MCF 10A (cell line): ENCODE measurements at regions of chr10 and their contacts with region 1.

Region 1: DNA sequence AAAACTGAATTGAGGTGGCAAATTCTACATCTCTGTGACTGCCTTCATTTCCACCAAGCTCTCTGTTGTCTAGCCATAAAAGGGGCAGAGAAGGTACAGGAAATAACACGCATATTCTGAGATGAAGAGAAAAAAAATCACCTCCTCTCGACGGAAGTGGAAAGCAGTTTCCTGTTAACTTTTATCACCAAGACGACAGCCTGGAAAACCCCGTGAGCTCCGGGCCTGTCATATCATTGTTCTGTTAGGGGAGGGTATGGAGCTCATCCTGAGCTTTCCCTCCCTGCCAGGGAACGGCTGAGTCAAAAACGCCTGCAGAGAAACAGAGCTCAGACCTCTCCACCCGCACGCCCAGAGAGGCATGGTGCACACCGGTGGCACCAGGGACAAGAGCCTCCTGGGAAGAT is 200.3 kb downstream of the PRPF18 start:
- DNase-seq: no peak
- H3K4me3 Mint-ChIP-seq: no peak overlapping the region
- H3K27ac Mint-ChIP-seq: no peak overlapping the region
- H3K4me1 Mint-ChIP-seq: no peaks in the 10 kb centered on the region
- H3K27me3 Mint-ChIP-seq: no peaks in the 10 kb centered on the region
- CTCF ChIP-seq: no peak

Region 2: GRCh38 chr10:14093730-14094484 is 306.9 kb after region 1 on chr10:
- CTCF ChIA-PET with region 1: interaction called, 45 read pairs
- POLR2A ChIA-PET with region 1: interaction called, 3 read pairs
- intact Hi-C with region 1: loop called (anchors 1 kb)
- DNase-seq: peak; percentile 29
- H3K4me3 Mint-ChIP-seq: no peak overlapping the region
- H3K27ac Mint-ChIP-seq: no peak overlapping the region
- H3K4me1 Mint-ChIP-seq: no peaks in the 10 kb centered on the region
- H3K27me3 Mint-ChIP-seq: no peaks in the 10 kb centered on the region
- CTCF ChIP-seq: peak; percentile 37

Region 3: DNA sequence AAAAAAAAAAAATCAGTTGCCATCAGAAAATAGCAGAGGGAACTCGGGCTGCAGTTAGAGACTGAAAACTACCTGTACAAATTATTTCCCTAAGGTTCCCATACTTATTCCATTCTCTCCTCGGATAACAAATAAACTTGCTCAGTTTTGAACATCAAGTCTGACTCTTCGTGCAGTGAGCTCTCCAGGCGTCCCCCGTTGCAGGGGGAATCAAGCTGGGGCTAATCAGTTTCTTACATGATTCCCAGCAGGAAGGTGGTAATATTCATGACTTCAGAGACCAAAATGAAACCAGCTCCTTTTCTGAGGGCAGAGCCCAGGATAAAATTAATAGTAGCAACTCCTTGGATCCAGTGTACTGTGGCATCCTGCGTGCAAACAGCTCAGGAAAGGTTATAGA is 408.4 kb after region 1 on chr10:
- CTCF ChIA-PET with region 1: no interaction called
- POLR2A ChIA-PET with region 1: no interaction called
- intact Hi-C with region 1: loop called (anchors 5 kb)
- DNase-seq: no peak
- H3K4me3 Mint-ChIP-seq: no peak overlapping the region
- H3K27ac Mint-ChIP-seq: no peak overlapping the region
- H3K4me1 Mint-ChIP-seq: no peaks in the 10 kb centered on the region
- H3K27me3 Mint-ChIP-seq: peaks cover 48% of the 10 kb centered on the region
- CTCF ChIP-seq: no peak

Region 4: GRCh38 chr10:14478604-14479003 is 691.6 kb after region 1 on chr10:
- CTCF ChIA-PET with region 1: interaction called, 3 read pairs
- POLR2A ChIA-PET with region 1: no interaction called
- intact Hi-C with region 1: loop called (anchors 1 kb)
- DNase-seq: peak; percentile 60
- H3K4me3 Mint-ChIP-seq: no peak overlapping the region
- H3K27ac Mint-ChIP-seq: no peak overlapping the region
- H3K4me1 Mint-ChIP-seq: no peaks in the 10 kb centered on the region
- H3K27me3 Mint-ChIP-seq: no peaks in the 10 kb centered on the region
- CTCF ChIP-seq: peak; percentile 22